Activated T-helper 2 cell treated with anti-CD3 and anti-CD28 coated beads, Interferon-gamma antibody, Interleukin-2, Interleukin-4, amounts not matched to agents 10 μg/mL and 5 μg/mL and 100 μg/mL, durations not matched to agents 14 hours and 24 hours and 36 hours (primary cell): ENCODE measurements at regions of chr2 and their contacts with region 1.

Region 1: GRCh38 chr2:176174824-176175708 is 13.4 kb upstream of the HOXD1 start:
- DNase-seq: no peak
- H3K4me3 Mint-ChIP-seq: no peak overlapping the region
- H3K27ac Mint-ChIP-seq: no peak overlapping the region
- H3K4me1 Mint-ChIP-seq: peaks cover 9% of the 10 kb centered on the region
- H3K27me3 Mint-ChIP-seq: peaks cover 84% of the 10 kb centered on the region

Region 2: DNA sequence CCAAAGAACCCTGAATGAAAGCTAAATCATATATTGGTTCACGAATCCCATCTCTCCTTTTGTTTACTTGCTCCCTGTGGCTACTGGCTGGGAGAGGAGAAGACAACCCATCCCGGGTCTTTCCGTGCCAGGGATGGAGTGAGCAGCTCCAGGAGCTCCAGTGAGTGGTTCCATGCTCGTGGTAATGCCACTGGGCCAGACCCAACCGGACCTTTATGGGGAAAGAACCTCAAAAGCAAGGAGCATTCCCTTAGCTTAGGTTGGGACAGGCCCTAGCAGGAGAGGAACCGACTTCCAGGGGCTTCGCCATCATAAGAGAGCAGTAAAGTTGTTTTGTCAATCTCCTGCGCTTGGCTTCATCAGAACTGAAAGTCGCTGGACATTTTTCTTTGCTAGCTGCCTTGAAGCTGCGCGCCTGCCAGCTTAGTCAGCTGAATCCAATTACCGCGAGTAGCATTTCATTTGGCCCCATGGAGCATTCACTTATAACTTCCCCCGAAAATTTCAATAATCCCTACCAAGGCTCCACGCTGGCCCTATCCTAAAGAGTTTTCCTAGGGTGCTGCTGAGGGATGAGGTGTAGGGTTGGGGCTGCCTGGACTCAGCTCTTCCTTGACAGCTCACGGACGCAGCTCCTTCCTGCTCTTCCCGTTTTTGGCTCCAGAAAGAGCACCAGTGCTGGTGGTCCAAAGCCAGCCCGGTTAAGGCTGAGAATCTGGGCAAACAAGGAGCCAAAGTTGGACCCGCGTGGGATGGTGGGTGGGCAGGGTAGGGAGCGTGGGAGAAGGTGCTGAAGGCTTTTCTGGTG is 13.0 kb before region 1 on chr2:
- intact Hi-C with region 1: loop called (anchors 1 kb)
- DNase-seq: no peak
- H3K4me3 Mint-ChIP-seq: no peak overlapping the region
- H3K27ac Mint-ChIP-seq: no peak overlapping the region
- H3K4me1 Mint-ChIP-seq: no peaks in the 10 kb centered on the region
- H3K27me3 Mint-ChIP-seq: peaks cover 88% of the 10 kb centered on the region